Heart left ventricle (tissue), 16 donors: ENCODE measurements at regions of chr2 and their contacts with region 1.

Region 1: GRCh38 chr2:43402452-43402944 is 176.1 kb upstream of the ZFP36L2 start:
- DNase-seq: no peak
- ATAC-seq: no peak
- H3K4me3 ChIP-seq: no peak overlapping the region
- H3K27ac ChIP-seq: no peak overlapping the region
- H3K4me1 ChIP-seq: peaks cover 0 to 47% (median 32%) of the 10 kb centered on the region in 12 donors
- H3K27me3 ChIP-seq: no peaks in the 10 kb centered on the region
- CTCF ChIP-seq: no peak
- POLR2A ChIP-seq: no peak

Region 2: GRCh38 chr2:43478411-43479086 is 76.1 kb after region 1 on chr2:
- intact Hi-C with region 1: loop called in 1 of 10 experiments (anchors 5 kb)
- DNase-seq: no peak
- ATAC-seq: no peak
- H3K4me3 ChIP-seq: no peak overlapping the region
- H3K27ac ChIP-seq: no peak overlapping the region
- H3K4me1 ChIP-seq: peaks cover 0 to 28% (median 19%) of the 10 kb centered on the region in 12 donors
- H3K27me3 ChIP-seq: no peaks in the 10 kb centered on the region
- CTCF ChIP-seq: no peak
- POLR2A ChIP-seq: no peak